PC-9 (cell line): ENCODE measurements at regions of chr21 and their contacts with region 1.

Region 1: GRCh38 chr21:14864211-14865021 is 200.4 kb downstream of the NRIP1 start:
- DNase-seq: peak in 1 of 2 experiments; percentile 58
- H3K4me3 ChIP-seq: no peak overlapping the region
- H3K27ac ChIP-seq: no peak overlapping the region
- H3K4me1 ChIP-seq: no peaks in the 10 kb centered on the region; the same call in 1 of the 2 replicates
- H3K27me3 ChIP-seq: no peaks in the 10 kb centered on the region
- CTCF ChIP-seq: 0 out of 2 replicates have a peak, but pooled peaks have one; percentile 28

Region 2: DNA sequence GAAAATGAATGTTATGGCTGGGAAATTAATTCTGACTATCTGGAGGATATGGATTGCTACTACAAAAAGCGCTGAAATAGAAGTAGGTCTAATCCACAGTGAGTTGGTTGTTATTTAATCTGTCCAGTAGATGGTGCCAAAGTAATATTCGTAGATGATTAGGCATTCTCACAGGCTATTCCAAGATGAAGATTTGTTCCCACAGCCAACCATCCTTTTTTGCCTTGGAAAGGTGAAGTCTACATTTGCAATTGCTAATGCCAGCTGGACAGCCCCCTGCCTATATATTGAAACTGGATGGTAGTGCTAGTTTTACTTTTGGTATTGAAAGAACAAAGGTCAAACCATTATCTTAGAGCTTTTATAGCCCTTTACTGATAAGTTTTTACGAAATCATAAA is 604.7 kb before region 1 on chr21:
- CTCF ChIA-PET with region 1: interaction called, 4 read pairs
- POLR2A ChIA-PET with region 1: no interaction called
- intact Hi-C with region 1: loop called (anchors 2 kb)
- DNase-seq: no peak
- H3K4me3 ChIP-seq: no peak overlapping the region
- H3K27ac ChIP-seq: no peak overlapping the region
- H3K4me1 ChIP-seq: no peaks in the 10 kb centered on the region
- H3K27me3 ChIP-seq: no peaks in the 10 kb centered on the region
- CTCF ChIP-seq: peak; percentile 67

Region 3: GRCh38 chr21:14454016-14455009 is 410.1 kb before region 1 on chr21:
- CTCF ChIA-PET with region 1: no interaction called
- POLR2A ChIA-PET with region 1: no interaction called
- intact Hi-C with region 1: no loop called
- DNase-seq: no peak
- H3K4me3 ChIP-seq: no peak overlapping the region
- H3K27ac ChIP-seq: no peak overlapping the region
- H3K4me1 ChIP-seq: no peaks in the 10 kb centered on the region
- H3K27me3 ChIP-seq: no peaks in the 10 kb centered on the region
- CTCF ChIP-seq: no peak

Region 4: GRCh38 chr21:14554948-14555347 is 309.5 kb before region 1 on chr21:
- CTCF ChIA-PET with region 1: no interaction called
- POLR2A ChIA-PET with region 1: no interaction called
- intact Hi-C with region 1: no loop called
- DNase-seq: no peak
- H3K4me3 ChIP-seq: no peak overlapping the region
- H3K27ac ChIP-seq: no peak overlapping the region
- H3K4me1 ChIP-seq: no peaks in the 10 kb centered on the region
- H3K27me3 ChIP-seq: no peaks in the 10 kb centered on the region
- CTCF ChIP-seq: no peak

Region 5: GRCh38 chr21:14737922-14738321 is 126.5 kb before region 1 on chr21:
- CTCF ChIA-PET with region 1: no interaction called
- POLR2A ChIA-PET with region 1: no interaction called
- intact Hi-C with region 1: loop called (anchors 5 kb)
- DNase-seq: peak; percentile 6 to 37
- H3K4me3 ChIP-seq: no peak overlapping the region
- H3K27ac ChIP-seq: no peak overlapping the region
- H3K4me1 ChIP-seq: peaks cover 7% of the 10 kb centered on the region; the same call in 1 of the 2 replicates
- H3K27me3 ChIP-seq: no peaks in the 10 kb centered on the region
- CTCF ChIP-seq: peak; percentile 63

Region 6: DNA sequence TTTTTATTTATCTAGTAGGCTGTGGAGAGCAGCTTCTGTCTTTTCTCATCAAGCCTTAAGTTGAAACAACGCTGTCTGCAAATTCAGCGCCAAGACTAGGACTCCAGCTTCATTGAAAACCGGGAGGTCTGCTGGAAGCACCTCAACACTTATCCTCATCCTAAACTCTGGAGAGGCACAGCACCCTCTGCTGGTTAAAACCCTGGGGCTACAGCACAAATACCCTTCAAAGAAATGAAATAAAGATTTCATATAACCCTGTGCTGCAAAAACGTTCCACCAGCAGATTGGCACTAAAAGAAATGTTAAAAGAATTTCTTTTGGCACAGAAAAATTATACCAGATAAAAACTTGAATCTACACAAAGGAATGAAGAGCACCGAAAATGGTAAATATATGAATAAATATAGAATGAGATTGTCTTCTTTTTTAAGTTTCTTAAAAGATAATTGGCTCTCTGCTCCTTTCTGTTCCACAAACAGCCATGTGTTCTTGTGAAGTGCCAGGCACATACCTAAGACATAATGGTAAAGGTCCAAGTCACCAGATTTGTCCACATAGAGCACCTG is 90.6 kb before region 1 on chr21:
- CTCF ChIA-PET with region 1: no interaction called
- POLR2A ChIA-PET with region 1: no interaction called
- intact Hi-C with region 1: no loop called
- DNase-seq: peak in 1 of 2 experiments; percentile 2
- H3K4me3 ChIP-seq: no peak overlapping the region
- H3K27ac ChIP-seq: no peak overlapping the region
- H3K4me1 ChIP-seq: no peaks in the 10 kb centered on the region
- H3K27me3 ChIP-seq: no peaks in the 10 kb centered on the region
- CTCF ChIP-seq: peak; percentile 52

Region 7: GRCh38 chr21:15064576-15065391 is 200.4 kb after region 1 on chr21 and contains the start of gene NRIP1:
- CTCF ChIA-PET with region 1: no interaction called
- POLR2A ChIA-PET with region 1: no interaction called
- intact Hi-C with region 1: loop called (anchors 1 kb)
- DNase-seq: peak; percentile 65 to 84
- H3K4me3 ChIP-seq: peak within 1 kb of the TSS; percentile 86
- H3K27ac ChIP-seq: peak within 1 kb of the TSS; percentile 74
- H3K4me1 ChIP-seq: peaks cover 41% of the 10 kb centered on the region
- H3K27me3 ChIP-seq: no peaks in the 10 kb centered on the region
- CTCF ChIP-seq: no peak
- total RNA-seq, gene NRIP1: 25.2 and 33.0 TPM in 2 replicates

Region 8: GRCh38 chr21:15483138-15483780 is 618.8 kb after region 1 on chr21:
- CTCF ChIA-PET with region 1: no interaction called
- POLR2A ChIA-PET with region 1: no interaction called
- intact Hi-C with region 1: loop called (anchors 1 kb)
- DNase-seq: peak; percentile 55 to 78
- H3K4me3 ChIP-seq: no peak overlapping the region
- H3K27ac ChIP-seq: no peak overlapping the region
- H3K4me1 ChIP-seq: peaks cover 6% of the 10 kb centered on the region; the same call in 1 of the 2 replicates
- H3K27me3 ChIP-seq: no peaks in the 10 kb centered on the region
- CTCF ChIP-seq: peak; percentile 91

Region 9: DNA sequence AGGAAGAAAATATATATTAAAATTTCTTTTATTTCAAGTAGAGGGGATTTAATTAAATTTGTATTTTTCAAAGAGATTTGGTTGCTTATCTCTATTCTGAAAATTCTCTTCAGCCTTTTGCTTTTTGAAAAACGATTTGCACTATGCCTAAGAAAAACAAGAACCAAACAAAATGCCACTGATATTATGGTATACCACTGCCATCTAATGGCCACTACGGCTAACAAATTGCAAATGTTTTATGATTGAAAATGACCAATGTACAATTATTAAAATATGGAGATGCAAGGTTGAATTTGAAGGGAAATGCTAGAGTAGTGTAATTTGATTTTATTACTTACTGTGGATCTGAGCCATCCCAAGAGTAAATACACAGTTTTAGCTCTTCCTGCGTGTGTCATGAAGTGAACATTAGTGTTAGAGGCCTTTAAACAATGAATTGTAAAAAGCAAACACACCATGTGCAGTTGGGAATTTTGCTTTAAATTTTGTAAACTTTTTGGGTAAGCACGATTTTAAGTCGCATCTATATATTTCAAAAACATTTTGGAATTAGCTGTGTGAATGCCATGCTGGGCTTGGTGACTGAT is 728.0 kb after region 1 on chr21:
- CTCF ChIA-PET with region 1: no interaction called
- POLR2A ChIA-PET with region 1: no interaction called
- intact Hi-C with region 1: loop called (anchors 5 kb)
- DNase-seq: peak in 1 of 2 experiments; percentile 39
- H3K4me3 ChIP-seq: no peak overlapping the region
- H3K27ac ChIP-seq: no peak overlapping the region
- H3K4me1 ChIP-seq: no peaks in the 10 kb centered on the region
- H3K27me3 ChIP-seq: no peaks in the 10 kb centered on the region
- CTCF ChIP-seq: peak; percentile 78